Naive thymus-derived CD4-positive, alpha-beta T cell (primary cell): ENCODE measurements at regions of chr7 and their contacts with region 1.

Region 1: DNA sequence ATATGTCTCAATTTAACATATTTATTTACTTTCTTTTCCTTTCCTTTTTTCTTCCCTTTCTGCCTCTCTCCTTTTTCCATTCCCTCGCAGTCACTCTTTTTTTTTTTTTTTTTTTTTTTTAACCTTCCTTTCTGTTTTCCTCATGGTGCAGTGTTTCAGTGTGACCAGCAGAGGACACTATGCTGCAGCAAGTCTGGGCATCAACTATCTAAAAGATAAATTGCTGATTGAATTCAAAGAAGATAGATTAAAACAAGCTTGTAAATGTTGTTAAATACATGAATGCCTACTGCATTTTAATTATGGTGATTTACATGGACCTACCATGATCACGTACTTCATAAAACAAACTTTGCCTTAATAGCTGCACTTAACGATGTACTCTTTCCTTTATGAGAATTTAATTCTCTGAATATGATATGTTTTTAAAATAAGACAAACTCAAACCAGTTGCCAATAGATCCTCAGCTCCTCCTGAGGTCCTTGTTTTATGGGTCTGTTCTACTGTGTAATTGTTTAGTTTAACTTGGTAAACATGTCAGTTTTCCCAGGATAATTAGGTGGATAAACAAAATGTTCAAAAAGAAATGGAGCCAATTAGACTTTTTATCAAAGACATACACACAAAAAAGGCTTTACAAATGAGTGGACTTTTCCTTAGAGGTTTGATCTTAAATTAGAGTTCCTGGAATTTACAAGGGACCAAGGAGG is 101.0 kb upstream of the AGR3 start:
- DNase-seq: peak in 6 of 9 donors; percentile 4 to 55 (median 34)
- ATAC-seq: peak; percentile 74
- H3K4me3 ChIP-seq: no peak overlapping the region
- H3K4me3 Mint-ChIP-seq: no peak overlapping the region
- H3K27ac ChIP-seq: no peak overlapping the region
- H3K27ac Mint-ChIP-seq: peak overlapping the region in 3 of 9 donors; percentile 1 to 51 (median 26)
- H3K4me1 ChIP-seq: no peaks in the 10 kb centered on the region
- H3K4me1 Mint-ChIP-seq: peaks cover 0 to 7% (median 4%) of the 10 kb centered on the region in 7 donors
- H3K27me3 ChIP-seq: peaks cover 0 to 5% of the 10 kb centered on the region in 2 donors
- H3K27me3 Mint-ChIP-seq: peaks cover 14 to 60% (median 25%) of the 10 kb centered on the region in 5 donors

Region 2: GRCh38 chr7:16926283-16926682 is 56.5 kb before region 1 on chr7:
- CTCF ChIA-PET with region 1: no interaction called
- POLR2A ChIA-PET with region 1: no interaction called
- intact Hi-C with region 1: loop called in 1 of 2 experiments (anchors 1 kb)
- DNase-seq: no peak
- ATAC-seq: peak; percentile 78
- H3K4me3 ChIP-seq: no peak overlapping the region
- H3K4me3 Mint-ChIP-seq: no peak overlapping the region
- H3K27ac ChIP-seq: no peak overlapping the region
- H3K27ac Mint-ChIP-seq: peak overlapping the region in 1 of 9 donors; percentile 44
- H3K4me1 ChIP-seq: peaks cover 0 to 12% of the 10 kb centered on the region in 2 donors
- H3K4me1 Mint-ChIP-seq: peaks cover 6 to 52% (median 32%) of the 10 kb centered on the region in 7 donors
- H3K27me3 ChIP-seq: no peaks in the 10 kb centered on the region
- H3K27me3 Mint-ChIP-seq: peaks cover 0 to 5% (median 0%) of the 10 kb centered on the region in 5 donors

Region 3: GRCh38 chr7:17195576-17195975 is 212.8 kb after region 1 on chr7:
- CTCF ChIA-PET with region 1: no interaction called
- POLR2A ChIA-PET with region 1: no interaction called
- intact Hi-C with region 1: loop called in 1 of 2 experiments (anchors 5 kb)
- DNase-seq: no peak
- ATAC-seq: no peak
- H3K4me3 ChIP-seq: no peak overlapping the region
- H3K4me3 Mint-ChIP-seq: no peak overlapping the region
- H3K27ac ChIP-seq: no peak overlapping the region
- H3K27ac Mint-ChIP-seq: no peak overlapping the region
- H3K4me1 ChIP-seq: no peaks in the 10 kb centered on the region
- H3K4me1 Mint-ChIP-seq: peaks cover 0 to 10% (median 0%) of the 10 kb centered on the region in 7 donors
- H3K27me3 ChIP-seq: no peaks in the 10 kb centered on the region
- H3K27me3 Mint-ChIP-seq: no peaks in the 10 kb centered on the region

Region 4: DNA sequence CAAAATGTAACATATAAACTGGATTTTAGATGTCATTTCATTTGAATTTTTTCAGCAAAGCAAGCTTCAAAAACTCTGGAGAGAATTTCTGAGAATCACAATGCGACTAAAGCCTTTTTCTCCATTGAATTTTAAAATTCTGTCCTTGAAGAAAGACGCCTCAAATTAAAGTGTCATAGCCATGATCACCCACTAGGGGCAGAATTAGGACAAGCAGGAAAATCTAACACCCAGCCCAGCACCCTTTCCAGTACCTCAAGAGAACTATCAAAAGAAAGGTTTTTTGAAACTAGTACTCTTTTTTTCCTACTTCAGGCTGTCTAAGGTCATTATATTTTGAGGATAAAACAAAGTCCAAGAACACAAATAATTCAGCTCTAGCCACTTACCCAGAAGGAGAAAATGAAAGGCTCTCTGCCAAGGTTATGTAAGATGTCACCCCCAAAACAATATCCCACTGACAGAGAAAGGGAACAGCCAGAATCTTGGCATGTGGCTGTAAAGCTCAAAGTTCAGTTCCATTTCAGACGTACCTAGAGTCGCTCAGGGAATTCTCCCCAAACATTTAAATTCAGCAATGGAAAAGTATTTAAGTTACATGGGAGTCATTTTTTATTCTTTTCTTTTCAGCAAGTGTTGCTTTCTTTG is 658.1 kb after region 1 on chr7:
- CTCF ChIA-PET with region 1: no interaction called
- POLR2A ChIA-PET with region 1: no interaction called
- intact Hi-C with region 1: loop called (anchors 1 to 2 kb)
- DNase-seq: peak in 4 of 9 donors; percentile 1 to 31 (median 10)
- ATAC-seq: no peak
- H3K4me3 ChIP-seq: no peak overlapping the region
- H3K4me3 Mint-ChIP-seq: no peak overlapping the region
- H3K27ac ChIP-seq: no peak overlapping the region
- H3K27ac Mint-ChIP-seq: no peak overlapping the region
- H3K4me1 ChIP-seq: no peaks in the 10 kb centered on the region
- H3K4me1 Mint-ChIP-seq: no peaks in the 10 kb centered on the region
- H3K27me3 ChIP-seq: no peaks in the 10 kb centered on the region
- H3K27me3 Mint-ChIP-seq: peaks cover 7 to 19% (median 11%) of the 10 kb centered on the region in 5 donors

Region 5: GRCh38 chr7:18345641-18346234 is 1362.9 kb after region 1 on chr7:
- CTCF ChIA-PET with region 1: no interaction called
- POLR2A ChIA-PET with region 1: no interaction called
- intact Hi-C with region 1: loop called in 1 of 2 experiments (anchors 1 kb)
- DNase-seq: peak in 5 of 9 donors; percentile 8 to 43 (median 30)
- ATAC-seq: no peak
- H3K4me3 ChIP-seq: no peak overlapping the region
- H3K4me3 Mint-ChIP-seq: no peak overlapping the region
- H3K27ac ChIP-seq: no peak overlapping the region
- H3K27ac Mint-ChIP-seq: no peak overlapping the region
- H3K4me1 ChIP-seq: no peaks in the 10 kb centered on the region
- H3K4me1 Mint-ChIP-seq: no peaks in the 10 kb centered on the region
- H3K27me3 ChIP-seq: no peaks in the 10 kb centered on the region
- H3K27me3 Mint-ChIP-seq: peaks cover 3 to 12% (median 7%) of the 10 kb centered on the region in 5 donors